Posterior vena cava (tissue), 2 donors: ENCODE measurements at regions of chr13 and their contacts with region 1.

Region 1: DNA sequence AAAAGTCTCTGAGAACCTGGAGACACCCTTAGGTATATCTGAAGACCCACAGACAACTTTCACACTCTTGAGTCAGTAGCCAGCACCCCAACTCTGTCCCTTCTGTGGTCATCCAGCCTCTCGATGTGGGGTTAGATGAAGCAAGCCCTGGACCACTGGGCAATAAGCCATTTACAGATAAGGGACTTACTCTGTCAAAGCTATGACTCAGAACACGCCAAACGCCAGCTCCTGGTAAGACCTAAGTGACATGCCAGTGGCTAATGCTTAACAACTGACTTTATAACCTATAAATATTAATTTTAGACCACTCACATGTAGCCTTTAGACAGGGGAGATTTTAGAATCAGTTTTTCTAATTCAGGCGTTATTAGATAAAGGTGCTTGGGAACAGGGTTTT is 85.7 kb downstream of the SHISA2 start:
- DNase-seq: no peak

Region 2: DNA sequence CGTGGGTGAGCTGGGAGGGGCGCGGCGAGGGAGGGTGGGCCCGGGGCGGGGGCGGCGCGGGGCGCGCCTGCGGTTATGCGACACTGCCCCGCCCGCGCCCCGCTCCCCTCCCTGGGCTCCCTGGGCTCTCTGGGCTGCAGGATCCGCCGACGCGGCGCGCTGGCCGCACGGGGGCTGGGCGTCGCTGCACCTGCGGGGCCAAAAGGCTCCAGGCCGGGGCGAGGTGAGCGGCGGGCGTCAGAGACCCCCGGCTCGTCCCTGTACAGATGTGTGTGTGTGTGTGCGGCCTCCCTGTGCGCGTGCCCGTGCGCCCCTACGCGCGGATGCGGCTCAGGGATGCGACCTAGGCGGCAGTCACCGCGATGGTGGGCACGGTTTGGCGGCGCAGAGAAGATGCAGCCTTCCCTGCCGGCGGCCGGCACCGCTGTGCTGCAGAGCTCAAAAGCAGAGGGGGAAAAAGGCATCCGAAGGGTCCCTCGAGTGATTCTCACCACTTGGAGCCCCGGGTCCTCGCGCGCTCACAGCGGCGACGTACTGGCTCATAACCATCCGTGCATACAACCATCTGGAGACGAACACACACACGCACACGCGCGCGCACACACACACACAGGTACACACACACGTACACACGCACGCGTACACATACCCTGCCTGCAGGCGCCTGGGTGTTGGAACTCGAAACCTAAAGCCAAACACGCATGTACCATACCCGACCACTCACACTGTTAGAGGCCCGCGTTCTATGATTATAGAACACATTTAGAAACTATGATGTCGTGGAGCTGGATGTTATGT is 593.6 kb before region 1 on chr13:
- intact Hi-C with region 1: no loop called
- DNase-seq: no peak

Region 3: GRCh38 chr13:25920277-25920676 is 45.8 kb before region 1 on chr13:
- intact Hi-C with region 1: loop called in 1 of 2 experiments (anchors 2 kb)
- DNase-seq: no peak

Region 4: DNA sequence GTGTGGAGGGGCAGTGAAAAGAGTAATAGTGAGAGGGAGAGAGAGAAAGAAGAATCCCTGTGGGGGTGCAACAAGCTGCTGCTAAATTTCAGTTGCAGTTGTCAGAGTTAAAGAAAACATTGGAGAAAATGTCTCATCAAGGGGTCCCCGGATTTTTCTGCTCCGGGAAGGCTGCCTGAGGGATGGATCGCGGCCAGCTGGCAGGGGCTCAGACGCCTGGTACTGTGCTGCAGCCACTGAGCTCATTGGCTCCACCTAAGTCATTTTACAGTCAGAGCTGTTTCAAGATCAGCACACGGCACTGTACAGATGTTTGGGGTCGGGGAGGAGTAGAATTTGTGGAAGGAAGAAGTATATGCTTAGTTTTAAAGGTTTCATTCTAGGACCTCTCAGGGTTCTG is 20.5 kb before region 1 on chr13:
- intact Hi-C with region 1: no loop called
- DNase-seq: no peak

Region 5: DNA sequence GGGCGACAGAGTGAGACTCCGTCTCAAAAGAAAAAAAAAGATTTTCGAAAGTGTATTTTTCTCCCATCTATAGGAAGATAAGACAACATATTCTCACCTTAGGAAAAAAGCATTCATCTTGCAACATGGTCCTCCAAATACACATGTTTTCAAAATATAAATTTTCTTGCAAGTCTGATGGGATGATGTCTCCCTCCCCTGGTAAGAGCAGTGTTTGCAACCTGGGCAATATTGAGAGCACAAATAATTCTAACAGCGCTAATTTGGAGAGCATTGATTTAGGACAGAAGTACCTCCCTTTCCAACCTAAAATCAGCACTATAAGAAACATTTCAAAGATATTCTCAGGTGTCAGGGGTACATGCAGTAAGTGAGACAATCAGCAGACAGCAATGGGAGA is 146.8 kb after region 1 on chr13:
- intact Hi-C with region 1: no loop called
- DNase-seq: no peak

Region 6: GRCh38 chr13:26382366-26382765 is 416.3 kb after region 1 on chr13:
- intact Hi-C with region 1: no loop called
- DNase-seq: no peak